K562 (cell line): ENCODE measurements at regions of chr17 and their contacts with region 1.

Region 1: GRCh38 chr17:76296186-76296585 is 11.9 kb downstream of the QRICH2 start:
- DNase-seq: no peak
- ATAC-seq: no peak
- H3K4me3 ChIP-seq: no peak overlapping the region
- H3K27ac ChIP-seq: no peak overlapping the region
- H3K4me1 ChIP-seq: no peaks in the 10 kb centered on the region
- H3K27me3 ChIP-seq: no peaks in the 10 kb centered on the region
- CTCF ChIP-seq: no peak
- EP300 ChIP-seq: no peak
- POLR2A ChIP-seq: no peak
- RAD21 ChIP-seq: no peak

Region 2: GRCh38 chr17:75904749-75905521 is 391.3 kb before region 1 on chr17 and contains the start of gene MRPL38:
- CTCF ChIA-PET with region 1: interaction called, 4 read pairs
- POLR2A ChIA-PET with region 1: no interaction called
- in situ Hi-C with region 1: loop called (anchors 5 kb)
- intact Hi-C with region 1: no loop called
- DNase-seq: peak; percentile 93 to 96 (median 95)
- ATAC-seq: peak; percentile 98
- H3K4me3 ChIP-seq: peak within 1 kb of the TSS; percentile 87
- H3K27ac ChIP-seq: peak within 1 kb of the TSS; percentile 85
- H3K4me1 ChIP-seq: peaks cover 6 to 49% of the 10 kb centered on the region in 2 experiments; a peak in 4 of 5 replicates
- H3K27me3 ChIP-seq: no peaks in the 10 kb centered on the region
- CTCF ChIP-seq: peak; percentile 92 to 97 (median 95)
- EP300 ChIP-seq: peak; percentile 45
- POLR2A ChIP-seq: peak; percentile 67; the same call in 1 of the 2 replicates
- RAD21 ChIP-seq: peak; percentile 100
- polyA plus RNA-seq, gene MRPL38: 4.5 to 13.6 TPM

Region 3: DNA sequence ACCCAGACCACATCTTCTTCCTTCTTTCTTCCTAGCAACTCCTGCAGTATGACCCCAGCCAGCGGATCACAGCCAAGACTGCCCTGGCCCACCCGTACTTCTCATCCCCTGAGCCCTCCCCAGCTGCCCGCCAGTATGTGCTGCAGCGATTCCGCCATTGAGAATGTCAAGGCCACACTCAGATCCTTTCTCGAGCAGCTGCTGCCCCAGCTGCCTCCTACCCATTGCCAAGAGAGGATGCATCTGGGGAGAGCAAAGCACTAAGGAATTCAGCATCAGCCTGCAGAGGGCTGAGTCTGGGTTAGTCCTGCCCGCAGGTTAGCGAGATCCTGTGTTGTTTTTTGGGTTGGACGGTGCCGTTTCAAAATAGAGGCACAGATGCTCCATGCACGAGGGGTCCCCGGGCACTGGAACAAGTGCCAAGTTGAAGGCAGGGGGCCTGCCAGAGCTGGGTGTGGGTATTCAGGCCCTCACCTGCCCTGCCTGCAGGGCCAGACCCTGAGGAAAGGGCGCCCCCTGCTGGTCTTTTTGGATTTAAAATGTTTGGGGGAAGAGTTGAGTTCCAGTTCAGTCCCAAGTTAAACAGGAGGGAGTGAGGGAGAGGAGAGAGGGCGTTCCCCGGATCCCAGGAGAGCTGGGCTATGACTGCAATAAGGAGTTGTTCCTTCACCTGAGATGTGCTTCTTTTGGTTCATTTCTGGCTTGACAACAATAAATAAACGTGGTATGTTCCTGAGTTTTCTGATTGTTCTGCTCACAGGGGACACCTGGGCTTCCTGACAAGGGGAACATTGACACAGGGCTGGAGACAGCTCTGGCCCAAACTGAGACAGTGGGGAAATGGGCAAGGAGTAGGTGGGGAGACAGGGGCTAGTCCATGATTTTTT is 290.7 kb before region 1 on chr17:
- CTCF ChIA-PET with region 1: interaction called, 3 read pairs
- POLR2A ChIA-PET with region 1: no interaction called
- in situ Hi-C with region 1: loop called (anchors 5 kb)
- intact Hi-C with region 1: loop called (anchors 5 kb)
- DNase-seq: peak; percentile 79 to 89 (median 81)
- ATAC-seq: peak; percentile 89
- H3K4me3 ChIP-seq: no peak overlapping the region
- H3K27ac ChIP-seq: no peak overlapping the region
- H3K4me1 ChIP-seq: peaks cover 0 to 45% of the 10 kb centered on the region in 2 experiments; a peak in 3 of 5 replicates
- H3K27me3 ChIP-seq: peaks cover 31 to 34% of the 10 kb centered on the region in 2 experiments
- CTCF ChIP-seq: peak; percentile 83 to 91 (median 86)
- EP300 ChIP-seq: no peak
- POLR2A ChIP-seq: no peak
- RAD21 ChIP-seq: peak; percentile 96 to 97

Region 4: GRCh38 chr17:76014184-76014924 is 281.8 kb before region 1 on chr17:
- CTCF ChIA-PET with region 1: interaction called, 12 read pairs
- POLR2A ChIA-PET with region 1: no interaction called
- in situ Hi-C with region 1: loop called (anchors 5 kb)
- intact Hi-C with region 1: loop called (anchors 5 kb)
- DNase-seq: peak; percentile 84 to 90 (median 88)
- ATAC-seq: peak; percentile 97
- H3K4me3 ChIP-seq: no peak overlapping the region
- H3K27ac ChIP-seq: no peak overlapping the region
- H3K4me1 ChIP-seq: peaks cover 0 to 49% of the 10 kb centered on the region in 2 experiments; a peak in 3 of 5 replicates
- H3K27me3 ChIP-seq: peaks cover 32 to 72% of the 10 kb centered on the region in 2 experiments; a peak in 4 of 5 replicates
- CTCF ChIP-seq: peak; percentile 94 to 96 (median 94)
- EP300 ChIP-seq: no peak
- POLR2A ChIP-seq: no peak
- RAD21 ChIP-seq: peak; percentile 79 to 96

Region 5: DNA sequence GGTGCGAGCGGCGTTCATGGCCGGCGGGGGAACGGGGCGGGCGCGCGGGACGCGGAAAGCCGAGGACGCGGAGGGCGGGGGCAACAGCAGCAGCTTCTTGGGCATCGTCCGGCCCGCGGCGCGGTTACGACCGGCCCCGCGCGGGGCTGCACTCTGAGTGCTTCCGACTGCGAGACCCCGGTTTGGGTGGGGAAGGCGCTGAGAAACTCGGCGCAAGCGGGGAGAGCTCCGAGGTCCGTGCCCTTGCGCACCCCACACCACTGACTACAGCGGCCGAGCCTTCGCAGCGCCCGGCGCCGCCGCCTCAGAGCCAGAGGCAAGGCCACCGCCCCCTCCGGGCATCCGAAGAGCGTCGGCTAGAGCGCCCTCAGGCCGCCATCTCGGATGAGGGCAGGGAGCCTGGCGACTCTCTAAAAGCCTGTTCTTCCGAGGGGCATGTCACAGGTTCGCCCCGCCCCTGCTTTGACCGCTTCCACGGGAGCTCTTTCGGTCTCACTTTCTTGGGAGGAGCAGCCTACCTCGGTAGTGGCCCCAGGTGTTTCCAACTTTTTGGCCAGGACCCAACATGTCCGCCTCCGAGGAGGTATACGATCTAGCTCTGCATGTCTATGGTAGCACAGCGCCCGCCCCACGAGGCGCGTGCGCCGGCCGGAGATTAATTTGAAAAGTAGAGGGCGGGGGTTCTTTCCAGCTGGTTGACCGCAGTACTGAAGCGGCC is 57.6 kb after region 1 on chr17 and contains the start of gene PRPSAP1:
- CTCF ChIA-PET with region 1: no interaction called
- POLR2A ChIA-PET with region 1: no interaction called
- in situ Hi-C with region 1: no loop called
- intact Hi-C with region 1: no loop called
- DNase-seq: peak; percentile 87 to 96 (median 89)
- ATAC-seq: peak; percentile 94
- H3K4me3 ChIP-seq: peak within 1 kb of the TSS; percentile 89
- H3K27ac ChIP-seq: peak within 1 kb of the TSS; percentile 100
- H3K4me1 ChIP-seq: peaks cover 18 to 39% of the 10 kb centered on the region in 2 experiments; a peak in 4 of 5 replicates
- H3K27me3 ChIP-seq: no peaks in the 10 kb centered on the region
- CTCF ChIP-seq: 0 out of 6 replicates have a peak, but pooled peaks of 1 of the 3 experiments have one; percentile 6
- EP300 ChIP-seq: no peak
- POLR2A ChIP-seq: peak; percentile 87
- RAD21 ChIP-seq: no peak
- polyA plus RNA-seq, gene PRPSAP1: 21.9 to 31.9 TPM